ENCODE measurements at regions of chr3 and their contacts with region 1.

Region 1: DNA sequence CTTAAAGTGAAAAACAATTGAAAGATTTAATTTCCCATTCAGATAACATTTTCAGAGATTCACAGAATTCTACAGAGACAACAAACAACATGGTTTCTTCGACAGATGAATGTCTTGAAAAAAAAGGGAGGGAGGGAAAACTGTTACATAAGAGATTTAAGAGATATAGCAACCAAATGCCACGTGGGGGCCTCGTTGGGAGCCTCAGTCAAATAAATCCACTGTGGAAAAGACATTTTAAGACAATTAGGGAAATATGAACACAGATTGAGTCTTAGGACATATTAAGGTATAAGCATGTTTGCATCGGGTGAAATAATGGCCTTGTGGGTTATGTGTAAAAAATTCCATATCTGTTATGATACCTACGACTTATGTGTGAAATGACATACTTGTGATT is 5.0 kb upstream of the PRRT3 start:
- DNase-seq: no peak

Region 2: GRCh38 chr3:9704347-9705322 is 252.6 kb before region 1 on chr3:
- CTCF ChIA-PET with region 1: no interaction called
- POLR2A ChIA-PET with region 1: no interaction called
- DNase-seq: peak; percentile 78

Region 3: DNA sequence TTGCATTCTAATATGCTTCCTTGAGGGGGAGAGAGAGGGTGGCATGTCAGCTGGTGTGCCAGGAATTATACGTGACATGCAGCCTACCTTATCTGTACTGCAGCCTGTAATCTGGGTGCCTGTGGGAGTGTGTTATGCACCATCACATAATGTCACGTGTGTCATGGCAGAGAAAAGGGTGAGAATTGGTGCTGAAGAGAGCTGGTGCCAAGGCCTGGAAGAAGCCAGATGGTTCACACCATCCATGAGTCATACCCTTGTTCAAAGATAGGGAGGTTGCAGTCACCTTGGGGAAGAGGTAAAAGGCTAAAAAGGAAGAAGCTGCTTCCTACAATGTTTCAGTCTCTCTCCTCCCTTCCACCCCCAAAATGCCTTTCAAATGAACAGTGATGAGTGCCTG is 220.4 kb before region 1 on chr3:
- CTCF ChIA-PET with region 1: no interaction called
- POLR2A ChIA-PET with region 1: no interaction called
- DNase-seq: no peak

Region 4: DNA sequence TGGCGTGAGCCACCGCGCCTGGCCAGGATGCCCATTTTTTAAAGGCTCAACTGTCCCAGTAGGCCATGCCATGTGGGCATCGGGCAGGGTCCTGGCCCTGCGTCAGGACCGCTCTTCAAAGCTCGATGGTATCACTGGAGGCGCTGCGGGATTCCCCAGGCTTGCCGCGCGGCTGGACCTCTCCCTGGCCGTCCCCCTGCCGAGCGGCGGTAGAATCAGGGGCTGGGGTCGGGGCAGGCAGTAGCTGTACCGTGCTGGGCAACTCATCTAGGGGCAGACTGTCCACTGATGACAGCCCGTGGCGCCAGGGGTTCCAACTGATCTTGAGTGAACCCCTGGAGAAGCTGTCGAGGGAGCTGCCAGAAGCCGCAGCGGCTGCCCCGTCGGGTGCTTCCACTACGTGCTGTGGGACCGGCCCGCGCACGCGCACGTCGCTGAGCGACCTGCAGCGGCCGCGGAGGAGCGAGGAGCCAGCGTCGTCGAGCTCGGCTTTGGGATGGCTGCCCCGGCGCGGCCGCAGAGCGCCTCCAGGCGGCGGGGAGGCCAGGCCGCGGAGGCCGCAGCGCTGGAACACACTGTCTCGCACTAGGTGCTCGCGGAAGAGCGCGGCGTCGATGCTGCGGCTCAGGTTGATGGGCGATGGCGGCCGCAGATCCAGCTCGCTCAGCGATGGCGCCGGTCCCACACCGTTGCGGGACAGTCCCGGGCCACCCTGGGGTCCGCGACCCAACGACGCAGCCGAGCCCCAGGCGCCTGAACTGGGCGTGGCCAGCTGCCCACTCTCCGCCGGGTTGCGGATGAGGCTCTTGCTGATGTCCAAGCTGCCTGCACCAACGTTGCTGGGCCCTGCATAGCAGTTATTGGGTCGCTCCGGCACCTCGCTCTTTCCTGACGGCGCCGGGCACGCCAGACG is 10.8 kb before region 1 on chr3:
- CTCF ChIA-PET with region 1: interaction called, 10 read pairs
- POLR2A ChIA-PET with region 1: interaction called, 18 read pairs
- DNase-seq: peak; percentile 94

Region 5: GRCh38 chr3:10026084-10026890 is 69.1 kb after region 1 on chr3 and contains the start of gene FANCD2:
- CTCF ChIA-PET with region 1: no interaction called
- POLR2A ChIA-PET with region 1: no interaction called
- DNase-seq: peak; percentile 89

Region 6: GRCh38 chr3:10224784-10225665 is 267.8 kb after region 1 on chr3:
- CTCF ChIA-PET with region 1: no interaction called
- POLR2A ChIA-PET with region 1: no interaction called
- DNase-seq: peak; percentile 68

Measured in HEK293T (cell line).